IMR-90 (cell line): ENCODE measurements at regions of chr1 and their contacts with region 1.

Region 1: DNA sequence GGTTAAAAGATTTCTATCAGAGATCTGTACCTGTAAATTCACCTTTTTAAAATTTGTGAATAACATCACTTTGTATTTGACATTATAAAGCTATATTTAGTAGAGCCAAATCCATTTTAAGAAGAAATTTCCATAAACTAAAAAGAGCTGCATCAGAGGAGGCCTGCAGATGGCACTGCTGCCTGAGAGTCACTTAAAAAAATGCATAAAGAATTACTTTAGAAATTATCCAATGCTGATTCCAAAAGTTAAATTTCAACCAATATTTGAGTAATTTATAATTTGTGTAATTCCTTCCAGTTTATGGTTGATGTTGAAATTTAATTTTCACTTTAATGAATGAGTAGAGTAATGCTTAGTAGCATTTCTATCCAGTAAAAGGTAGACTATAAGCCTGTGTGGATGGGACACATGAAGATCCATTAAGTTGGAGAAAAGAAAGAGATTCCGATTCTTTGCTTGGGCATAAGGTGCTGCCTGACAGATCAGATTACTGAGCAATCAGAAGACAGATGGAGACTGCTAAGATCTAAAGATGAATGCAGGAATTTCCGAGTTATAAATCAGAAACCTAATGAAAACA is 20.7 kb upstream of the RPE65 start:
- DNase-seq: peak; percentile 41
- ATAC-seq: peak; percentile 74
- H3K4me3 ChIP-seq: no peak overlapping the region
- H3K27ac ChIP-seq: no peak overlapping the region
- H3K4me1 ChIP-seq: no peaks in the 10 kb centered on the region
- H3K27me3 ChIP-seq: no peaks in the 10 kb centered on the region
- CTCF ChIP-seq: peak; percentile 73
- POLR2A ChIP-seq: no peak
- RAD21 ChIP-seq: peak; percentile 71

Region 2: GRCh38 chr1:70142075-70142474 is 1671.6 kb after region 1 on chr1:
- CTCF ChIA-PET with region 1: no interaction called
- POLR2A ChIA-PET with region 1: no interaction called
- dilution Hi-C with region 1: no loop called
- in situ Hi-C with region 1: no loop called
- intact Hi-C with region 1: loop called (anchors 10 kb)
- DNase-seq: peak; percentile 45
- ATAC-seq: peak; percentile 55
- H3K4me3 ChIP-seq: no peak overlapping the region
- H3K27ac ChIP-seq: no peak overlapping the region
- H3K4me1 ChIP-seq: no peaks in the 10 kb centered on the region; the same call in 1 of the 2 replicates
- H3K27me3 ChIP-seq: no peaks in the 10 kb centered on the region
- CTCF ChIP-seq: peak; percentile 43
- POLR2A ChIP-seq: no peak
- RAD21 ChIP-seq: peak; percentile 37